Thyroid gland (tissue), 4 donors: ENCODE measurements at regions of chr19 and their contacts with region 1.

Region 1: GRCh38 chr19:32041681-32042292 is 303.6 kb upstream of the ZNF507 start:
- DNase-seq: peak; percentile 58 to 71
- H3K4me3 ChIP-seq: peak overlapping the region in 1 of 3 donors; percentile 7
- H3K27ac ChIP-seq: peak overlapping the region in 1 of 3 donors; percentile 10
- H3K4me1 ChIP-seq: peaks cover 0 to 10% of the 10 kb centered on the region in 2 donors
- H3K27me3 ChIP-seq: no peaks in the 10 kb centered on the region
- CTCF ChIP-seq: peak; percentile 61 to 95 (median 80)
- POLR2A ChIP-seq: no peak

Region 2: GRCh38 chr19:31676271-31677004 is 365.3 kb before region 1 on chr19:
- intact Hi-C with region 1: loop called (anchors 10 kb)
- DNase-seq: peak; percentile 21 to 26
- H3K4me3 ChIP-seq: no peak overlapping the region
- H3K27ac ChIP-seq: no peak overlapping the region
- H3K4me1 ChIP-seq: no peaks in the 10 kb centered on the region
- H3K27me3 ChIP-seq: no peaks in the 10 kb centered on the region
- CTCF ChIP-seq: peak in 4 of 6 experiments; percentile 13 to 51 (median 45)
- POLR2A ChIP-seq: no peak

Region 3: GRCh38 chr19:32082028-32082427 is 40.2 kb after region 1 on chr19:
- intact Hi-C with region 1: no loop called
- DNase-seq: no peak
- H3K4me3 ChIP-seq: no peak overlapping the region
- H3K27ac ChIP-seq: no peak overlapping the region
- H3K4me1 ChIP-seq: no peaks in the 10 kb centered on the region
- H3K27me3 ChIP-seq: no peaks in the 10 kb centered on the region
- CTCF ChIP-seq: no peak
- POLR2A ChIP-seq: no peak